OCI-LY7 (cell line): ENCODE measurements at regions of chr3 and their contacts with region 1.

Region 1: GRCh38 chr3:67819447-67819846 is 165.0 kb upstream of the SUCLG2 start:
- DNase-seq: peak; percentile 67
- H3K4me3 ChIP-seq: no peak overlapping the region
- H3K27ac ChIP-seq: no peak overlapping the region
- H3K4me1 ChIP-seq: peaks cover 16% of the 10 kb centered on the region
- CTCF ChIP-seq: peak; percentile 91

Region 2: DNA sequence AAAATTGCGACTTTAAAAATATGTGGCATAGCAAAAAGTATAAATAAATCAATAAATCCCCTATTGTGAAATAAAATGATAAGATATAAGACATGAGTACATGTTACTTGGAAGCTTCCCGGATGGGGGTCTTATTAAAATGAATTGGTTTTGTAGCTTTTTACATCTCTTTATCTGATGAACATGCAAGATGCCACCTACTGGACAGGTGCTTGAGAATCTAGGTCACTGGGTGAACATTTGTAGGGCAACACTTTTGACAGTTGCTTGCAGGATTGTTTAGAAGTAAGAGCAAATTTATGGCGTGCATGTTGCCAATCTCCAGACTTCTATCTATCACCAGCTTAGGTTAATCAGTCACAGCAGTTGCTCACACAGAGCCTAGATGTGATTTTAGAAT is 197.6 kb after region 1 on chr3:
- CTCF ChIA-PET with region 1: no interaction called
- POLR2A ChIA-PET with region 1: no interaction called
- intact Hi-C with region 1: loop called (anchors 5 kb)
- DNase-seq: peak; percentile 42
- H3K4me3 ChIP-seq: no peak overlapping the region
- H3K27ac ChIP-seq: no peak overlapping the region
- H3K4me1 ChIP-seq: no peaks in the 10 kb centered on the region
- CTCF ChIP-seq: peak; percentile 75

Region 3: DNA sequence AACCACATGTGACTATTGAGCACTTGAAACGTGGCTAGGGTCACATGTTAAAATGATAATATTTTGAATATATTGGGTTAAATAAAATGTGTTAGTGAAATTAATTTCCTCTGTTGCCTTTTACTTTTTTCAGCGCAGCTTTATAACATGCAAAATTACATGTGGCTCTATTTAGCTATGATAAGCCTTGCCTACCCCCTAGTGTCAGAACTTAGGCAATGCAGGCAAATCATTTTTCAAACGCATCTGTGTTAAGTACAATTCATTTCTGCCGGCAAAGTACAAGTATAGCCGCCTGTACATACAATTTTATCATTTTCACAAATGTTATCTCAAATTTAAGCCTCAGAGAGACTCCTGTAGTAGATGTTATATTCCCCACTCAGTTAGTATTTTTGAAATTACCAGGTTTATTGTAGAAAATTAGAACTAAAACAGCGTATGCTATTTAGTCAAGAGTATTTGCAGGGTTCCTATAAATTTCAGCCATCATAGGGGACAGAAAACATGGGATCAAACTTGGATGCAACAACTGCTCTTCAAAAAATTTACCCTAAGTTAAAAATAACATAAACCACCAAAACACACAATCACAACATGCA is 1056.8 kb after region 1 on chr3:
- CTCF ChIA-PET with region 1: no interaction called
- POLR2A ChIA-PET with region 1: no interaction called
- intact Hi-C with region 1: loop called (anchors 10 kb)
- DNase-seq: peak; percentile 66
- H3K4me3 ChIP-seq: no peak overlapping the region
- H3K27ac ChIP-seq: no peak overlapping the region
- H3K4me1 ChIP-seq: no peaks in the 10 kb centered on the region
- CTCF ChIP-seq: peak; percentile 99